Posterior vena cava (tissue), 2 donors: ENCODE measurements at regions of chr1 and their contacts with region 1.

Region 1: DNA sequence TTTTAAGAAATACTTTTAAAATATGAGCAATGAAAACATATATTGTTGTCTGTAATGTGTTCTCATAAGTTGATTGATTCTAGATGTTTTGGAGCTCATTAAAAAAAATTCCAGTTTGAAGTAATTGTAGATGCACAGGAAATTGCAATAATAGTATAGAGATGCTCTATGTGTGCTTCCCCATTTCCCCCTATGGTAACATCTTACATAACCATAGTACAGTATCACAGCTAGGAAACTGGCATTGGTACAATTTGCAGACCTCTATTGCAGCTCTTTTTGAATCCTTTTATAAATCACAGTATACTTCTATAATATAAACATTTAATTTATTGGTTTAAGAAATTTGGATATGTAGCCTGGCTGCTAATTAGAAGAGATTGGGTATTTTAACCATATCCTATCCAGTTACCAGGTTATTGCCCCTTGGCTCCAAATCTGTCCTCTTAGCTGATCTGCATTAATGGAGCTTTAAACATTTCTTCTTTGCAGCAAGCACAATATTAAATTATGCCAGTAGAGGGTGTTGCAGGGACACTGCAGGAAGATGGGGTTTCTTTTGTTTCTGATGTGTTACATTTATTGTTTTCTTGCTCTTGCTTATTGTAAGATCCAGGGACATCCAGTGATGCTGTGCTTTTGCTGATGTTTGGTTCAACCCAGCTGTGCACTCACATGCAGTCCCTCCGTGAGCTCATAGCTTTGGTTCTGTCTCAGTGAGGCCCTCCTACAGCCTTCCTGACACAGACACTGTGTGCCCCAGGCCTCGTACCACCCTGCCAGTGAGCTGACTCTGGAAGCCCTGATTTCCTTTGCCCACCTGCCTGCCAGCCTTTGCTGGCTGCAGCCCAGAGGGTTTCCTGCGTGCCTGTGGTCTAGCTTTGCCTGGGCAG is 103.3 kb downstream of the RABGAP1L start:
- DNase-seq: no peak

Region 2: GRCh38 chr1:174174461-174175329 is 87.9 kb before region 1 on chr1:
- intact Hi-C with region 1: no loop called
- DNase-seq: no peak

Region 3: GRCh38 chr1:174337000-174337681 is 74.5 kb after region 1 on chr1:
- intact Hi-C with region 1: no loop called
- DNase-seq: no peak

Region 4: GRCh38 chr1:174743654-174744561 is 481.3 kb after region 1 on chr1:
- intact Hi-C with region 1: loop called (anchors 5 to 10 kb)
- DNase-seq: no peak